Activated naive CD4-positive, alpha-beta T cell treated with anti-CD3 and anti-CD28 coated beads for 36 hours (primary cell): ENCODE measurements at regions of chr2 and their contacts with region 1.

Region 1: GRCh38 chr2:75403991-75404428 is 156.7 kb downstream of the EVA1A start:
- DNase-seq: no peak
- H3K4me3 Mint-ChIP-seq: no peak overlapping the region
- H3K27ac Mint-ChIP-seq: no peak overlapping the region
- H3K4me1 Mint-ChIP-seq: peaks cover 6% of the 10 kb centered on the region
- H3K27me3 Mint-ChIP-seq: no peaks in the 10 kb centered on the region

Region 2: GRCh38 chr2:74690571-74690970 is 713.4 kb before region 1 on chr2:
- CTCF ChIA-PET with region 1: no interaction called
- intact Hi-C with region 1: loop called (anchors 5 kb)
- DNase-seq: peak; percentile 46
- H3K4me3 Mint-ChIP-seq: no peak overlapping the region
- H3K27ac Mint-ChIP-seq: no peak overlapping the region
- H3K4me1 Mint-ChIP-seq: no peaks in the 10 kb centered on the region
- H3K27me3 Mint-ChIP-seq: no peaks in the 10 kb centered on the region

Region 3: GRCh38 chr2:75053484-75054112 is 350.4 kb before region 1 on chr2:
- CTCF ChIA-PET with region 1: no interaction called
- intact Hi-C with region 1: loop called (anchors 1 kb)
- DNase-seq: peak; percentile 22
- H3K4me3 Mint-ChIP-seq: no peak overlapping the region
- H3K27ac Mint-ChIP-seq: no peak overlapping the region
- H3K4me1 Mint-ChIP-seq: no peaks in the 10 kb centered on the region
- H3K27me3 Mint-ChIP-seq: no peaks in the 10 kb centered on the region

Region 4: DNA sequence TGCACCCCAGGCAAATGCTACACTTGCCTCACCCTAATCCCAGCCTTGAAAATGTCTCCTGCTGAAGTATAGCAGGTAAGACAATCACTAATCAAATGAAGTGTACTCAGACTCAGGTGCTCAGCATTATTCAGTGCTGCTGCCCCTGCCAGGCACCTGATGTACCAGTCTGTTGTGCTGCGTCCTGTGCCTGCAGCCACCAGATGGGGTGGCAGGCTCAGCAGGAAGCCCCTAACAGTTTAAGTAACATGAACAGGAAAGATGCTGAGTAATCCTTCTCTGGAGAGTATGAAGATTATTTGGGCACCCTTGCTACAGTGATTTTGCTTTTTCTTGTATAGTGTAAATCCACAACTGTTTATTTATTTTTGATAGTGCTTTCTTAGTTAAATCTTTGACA is 273.8 kb before region 1 on chr2:
- CTCF ChIA-PET with region 1: no interaction called
- intact Hi-C with region 1: loop called (anchors 10 kb)
- DNase-seq: peak; percentile 7
- H3K4me3 Mint-ChIP-seq: no peak overlapping the region
- H3K27ac Mint-ChIP-seq: no peak overlapping the region
- H3K4me1 Mint-ChIP-seq: no peaks in the 10 kb centered on the region
- H3K27me3 Mint-ChIP-seq: no peaks in the 10 kb centered on the region

Region 5: DNA sequence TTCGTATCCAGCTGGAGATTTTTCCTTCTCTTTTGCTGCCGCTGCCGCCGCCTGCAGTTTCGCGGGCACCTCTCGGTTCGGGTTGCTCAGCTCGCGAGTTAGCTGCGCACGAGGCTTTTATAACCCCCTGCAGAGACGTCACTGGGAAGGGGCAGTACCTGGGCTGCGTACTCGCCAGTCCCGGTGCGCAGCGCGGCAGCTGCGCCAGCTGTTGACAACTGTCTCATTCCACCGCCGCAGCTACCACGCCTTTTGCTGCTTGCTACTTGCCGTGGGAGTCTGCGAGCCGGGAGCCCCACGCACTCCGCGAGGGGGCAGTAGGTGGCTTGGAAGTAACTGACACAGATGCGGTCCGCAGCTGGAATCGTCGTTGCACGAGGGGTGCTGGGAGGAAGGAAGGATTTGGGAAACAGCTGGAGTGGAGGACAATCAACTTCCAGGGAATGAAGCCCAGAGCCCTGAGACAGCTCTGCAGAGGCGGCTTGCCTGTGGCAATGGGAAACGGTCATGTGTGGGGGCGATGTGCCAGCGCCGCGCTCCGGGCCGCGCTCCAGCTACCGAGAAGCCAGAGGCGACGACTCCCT is 204.5 kb before region 1 on chr2 and contains the start of gene TACR1:
- CTCF ChIA-PET with region 1: interaction called, 5 read pairs
- intact Hi-C with region 1: loop called (anchors 1 kb)
- DNase-seq: peak; percentile 72
- H3K4me3 Mint-ChIP-seq: peak within 1 kb of the TSS; percentile 66
- H3K27ac Mint-ChIP-seq: no peak within 1 kb of the TSS
- H3K4me1 Mint-ChIP-seq: peaks cover 7% of the 10 kb centered on the region
- H3K27me3 Mint-ChIP-seq: peaks cover 67% of the 10 kb centered on the region
- total RNA-seq, gene TACR1: not detected

Region 6: GRCh38 chr2:75608684-75609333 is 204.8 kb after region 1 on chr2:
- CTCF ChIA-PET with region 1: interaction called, 4 read pairs
- intact Hi-C with region 1: loop called (anchors 5 kb)
- DNase-seq: peak; percentile 62
- H3K4me3 Mint-ChIP-seq: no peak overlapping the region
- H3K27ac Mint-ChIP-seq: no peak overlapping the region
- H3K4me1 Mint-ChIP-seq: no peaks in the 10 kb centered on the region
- H3K27me3 Mint-ChIP-seq: peaks cover 55% of the 10 kb centered on the region

Region 7: DNA sequence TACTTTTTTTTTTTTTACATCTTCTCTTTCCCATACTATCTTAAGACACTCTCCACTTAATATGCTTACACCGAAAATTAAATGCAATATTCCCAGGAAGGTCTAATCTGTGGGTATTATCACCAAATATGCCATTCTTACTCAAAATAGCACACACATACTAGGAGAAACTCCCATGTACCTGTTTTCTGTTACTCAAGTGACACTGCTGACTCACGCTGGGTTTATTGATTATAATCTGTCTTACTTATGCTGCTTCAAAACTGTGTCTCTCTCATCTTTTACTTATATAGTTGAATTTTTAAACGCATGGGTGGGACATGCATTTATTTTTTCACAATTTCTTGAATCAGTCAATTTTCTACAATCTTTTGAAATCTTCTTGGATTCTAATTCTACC is 272.5 kb after region 1 on chr2:
- CTCF ChIA-PET with region 1: no interaction called
- intact Hi-C with region 1: no loop called
- DNase-seq: no peak
- H3K4me3 Mint-ChIP-seq: no peak overlapping the region
- H3K27ac Mint-ChIP-seq: no peak overlapping the region
- H3K4me1 Mint-ChIP-seq: peaks cover 8% of the 10 kb centered on the region
- H3K27me3 Mint-ChIP-seq: no peaks in the 10 kb centered on the region